ENCODE measurements at regions of chr15 and their contacts with region 1.

Region 1: DNA sequence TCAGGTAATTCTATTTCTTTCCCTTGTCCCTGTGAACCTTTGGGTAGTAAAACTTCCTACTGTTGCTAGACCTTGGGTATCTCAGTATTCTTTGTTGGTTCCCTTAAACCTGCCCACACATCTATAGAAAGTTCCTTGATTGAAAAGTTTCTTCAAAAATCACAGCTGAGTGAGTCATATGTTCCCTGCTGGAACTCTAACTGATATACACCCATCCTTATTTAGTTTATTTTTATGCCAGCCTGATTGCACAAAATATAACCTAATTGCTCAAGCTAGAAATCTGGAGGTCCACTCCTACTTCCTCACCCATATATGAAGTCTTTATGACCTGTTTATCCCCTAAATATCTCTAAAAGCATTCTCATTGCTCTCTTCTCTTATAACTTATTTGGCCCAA is 13.7 kb upstream of the GJD2 start:
- DNase-seq: no peak
- H3K4me3 ChIP-seq: no peak overlapping the region
- H3K27ac ChIP-seq: no peak overlapping the region
- H3K4me1 ChIP-seq: no peaks in the 10 kb centered on the region
- H3K27me3 ChIP-seq: no peaks in the 10 kb centered on the region
- CTCF ChIP-seq: no peak

Region 2: GRCh38 chr15:34663101-34663500 is 105.4 kb before region 1 on chr15:
- CTCF ChIA-PET with region 1: no interaction called
- dilution Hi-C with region 1: loop called (anchors 5 kb)
- in situ Hi-C with region 1: no loop called
- intact Hi-C with region 1: no loop called
- DNase-seq: no peak
- H3K4me3 ChIP-seq: no peak overlapping the region
- H3K27ac ChIP-seq: no peak overlapping the region
- H3K4me1 ChIP-seq: no peaks in the 10 kb centered on the region
- H3K27me3 ChIP-seq: no peaks in the 10 kb centered on the region
- CTCF ChIP-seq: no peak

Region 3: GRCh38 chr15:34837246-34838016 is 68.9 kb after region 1 on chr15:
- CTCF ChIA-PET with region 1: no interaction called
- dilution Hi-C with region 1: loop called (anchors 10 kb)
- in situ Hi-C with region 1: no loop called
- intact Hi-C with region 1: no loop called
- DNase-seq: peak; percentile 87
- H3K4me3 ChIP-seq: no peak overlapping the region
- H3K27ac ChIP-seq: no peak overlapping the region
- H3K4me1 ChIP-seq: peaks cover 5% of the 10 kb centered on the region
- H3K27me3 ChIP-seq: no peaks in the 10 kb centered on the region
- CTCF ChIP-seq: no peak